Activated naive CD8-positive, alpha-beta T cell treated with anti-CD3 and anti-CD28 coated beads, Interleukin-2, amount 10 ng/mL, durations not matched to agents 7 days and 5 days (primary cell): ENCODE measurements at regions of chr7 and their contacts with region 1.

Region 1: GRCh38 chr7:111089822-111090426 is 1.0 kb upstream of the LRRN3 start:
- DNase-seq: no peak
- ATAC-seq: no peak
- H3K4me3 Mint-ChIP-seq: peak overlapping the region; percentile 99
- H3K27ac Mint-ChIP-seq: no peak overlapping the region
- H3K4me1 Mint-ChIP-seq: peaks cover 43% of the 10 kb centered on the region
- H3K27me3 Mint-ChIP-seq: no peaks in the 10 kb centered on the region

Region 2: DNA sequence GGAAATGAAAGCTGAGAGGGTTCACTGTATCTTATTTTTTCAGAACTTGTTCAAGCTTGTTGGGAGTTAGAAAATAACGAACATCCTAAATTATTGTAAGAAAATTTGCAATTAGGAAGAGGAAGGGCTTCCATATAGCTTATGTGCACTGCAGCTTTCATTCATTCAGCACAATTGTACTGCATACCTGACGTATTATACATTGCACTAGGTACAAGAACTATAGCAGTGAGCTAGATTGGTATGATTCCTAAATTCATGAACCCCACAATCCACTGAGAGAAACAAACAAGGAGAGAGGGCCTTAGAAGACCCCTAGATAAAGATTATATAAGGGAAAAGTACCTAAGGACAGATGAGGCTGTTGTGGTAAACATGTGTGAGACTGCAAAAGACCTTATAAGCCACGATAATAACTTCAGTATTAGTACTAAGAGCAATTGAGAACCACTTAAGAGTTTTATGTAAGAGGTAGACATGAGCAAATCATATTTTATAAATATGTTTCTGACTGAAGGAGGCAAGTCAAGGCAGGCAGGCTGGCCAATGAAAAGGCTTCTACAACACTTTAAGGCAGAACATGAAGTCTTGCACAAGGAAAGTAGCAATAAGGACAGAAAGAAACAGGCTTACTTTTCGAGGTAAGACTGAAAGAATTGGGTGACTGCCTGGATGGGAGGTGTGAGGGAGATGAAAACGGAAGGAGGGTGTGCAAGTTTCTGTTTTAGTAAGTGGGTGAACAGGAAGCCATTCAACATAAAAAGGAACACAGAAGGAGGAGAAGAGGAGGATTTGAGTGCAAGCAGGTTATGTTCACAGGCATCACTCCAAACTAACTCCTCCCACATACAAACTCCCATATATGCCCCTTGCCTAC is 76.9 kb before region 1 on chr7:
- POLR2A ChIA-PET with region 1: interaction called, 46 read pairs
- DNase-seq: no peak
- ATAC-seq: peak; percentile 90
- H3K4me3 Mint-ChIP-seq: peak overlapping the region; percentile 85
- H3K27ac Mint-ChIP-seq: peak overlapping the region; percentile 95
- H3K4me1 Mint-ChIP-seq: peaks cover 67% of the 10 kb centered on the region
- H3K27me3 Mint-ChIP-seq: no peaks in the 10 kb centered on the region

Region 3: DNA sequence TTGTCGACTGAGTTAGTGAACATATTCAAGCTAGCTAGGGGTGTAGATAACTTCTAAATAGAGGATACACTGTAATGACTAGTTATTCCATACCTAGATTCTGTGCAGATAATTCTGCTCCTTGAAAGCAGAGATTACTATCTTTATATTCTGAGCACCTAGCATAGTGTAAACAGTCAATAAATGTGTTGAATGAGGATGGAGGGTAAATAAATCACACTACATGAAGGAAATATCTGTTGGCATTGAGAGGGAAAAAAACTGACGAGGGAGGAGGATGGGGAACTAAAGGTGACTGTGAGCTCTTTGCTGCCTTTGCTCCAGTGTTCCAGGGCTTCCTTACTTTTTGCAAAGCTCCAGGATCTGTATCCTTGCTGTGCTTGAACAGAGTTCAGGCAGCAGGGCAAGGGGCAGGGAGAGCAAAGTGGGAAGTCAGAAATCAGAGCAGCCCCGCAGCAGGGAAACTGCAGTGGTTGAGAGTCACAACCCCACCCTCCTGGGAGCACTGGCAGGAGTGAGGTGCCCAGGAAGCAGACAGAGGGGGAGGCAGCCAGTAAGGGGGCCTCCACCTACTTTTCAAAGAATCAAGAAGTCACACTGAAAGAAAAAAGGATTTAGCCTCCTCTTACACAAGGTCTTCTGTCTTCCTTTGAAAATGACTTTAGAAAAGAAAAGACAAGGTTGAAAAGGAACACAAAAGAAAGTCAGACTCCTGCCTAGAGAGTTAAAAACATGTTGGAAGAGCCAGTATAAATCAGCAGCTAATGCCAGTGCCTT is 70.8 kb before region 1 on chr7:
- POLR2A ChIA-PET with region 1: interaction called, 50 read pairs
- DNase-seq: peak; percentile 49
- ATAC-seq: peak; percentile 65
- H3K4me3 Mint-ChIP-seq: peak overlapping the region; percentile 55
- H3K27ac Mint-ChIP-seq: peak overlapping the region; percentile 60
- H3K4me1 Mint-ChIP-seq: peaks cover 74% of the 10 kb centered on the region
- H3K27me3 Mint-ChIP-seq: no peaks in the 10 kb centered on the region

Region 4: DNA sequence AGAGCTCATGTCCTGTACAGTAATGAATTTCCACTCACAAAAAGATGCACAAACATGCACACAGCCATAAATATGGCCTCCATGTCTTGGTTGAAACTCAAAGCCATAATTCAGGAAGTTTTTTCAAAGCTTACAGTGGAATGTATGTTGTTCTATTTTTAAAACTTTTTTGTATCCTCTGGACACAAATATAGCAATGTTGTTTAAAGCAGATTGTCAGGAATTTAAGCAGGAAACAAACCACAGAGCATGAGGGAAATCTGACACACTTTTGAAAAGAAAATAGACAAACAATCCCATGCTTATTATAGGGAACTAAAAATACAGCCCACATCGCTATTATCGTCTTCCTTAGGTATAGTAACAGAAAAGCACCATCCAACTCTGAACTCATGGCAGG is 22.5 kb after region 1 on chr7:
- POLR2A ChIA-PET with region 1: no interaction called
- DNase-seq: no peak
- ATAC-seq: no peak
- H3K4me3 Mint-ChIP-seq: no peak overlapping the region
- H3K27ac Mint-ChIP-seq: no peak overlapping the region
- H3K4me1 Mint-ChIP-seq: peaks cover 44% of the 10 kb centered on the region
- H3K27me3 Mint-ChIP-seq: no peaks in the 10 kb centered on the region

Region 5: DNA sequence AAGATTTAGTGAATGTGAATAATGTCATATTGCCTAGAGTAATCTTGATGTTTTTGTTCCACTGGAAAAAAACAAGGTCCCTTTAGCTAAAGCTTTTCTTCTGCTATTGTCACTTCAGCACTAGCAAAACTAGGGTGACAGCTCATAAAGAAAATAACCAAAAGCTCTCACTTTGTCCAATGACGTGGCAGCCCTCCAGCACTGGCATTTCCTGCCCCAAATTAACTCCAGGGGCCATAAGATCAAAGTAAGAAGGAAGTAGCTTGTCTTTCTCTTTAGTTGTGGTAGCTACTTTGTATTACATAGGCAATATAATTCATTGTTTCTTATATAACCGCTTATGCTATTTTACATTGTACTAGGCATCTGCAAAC is 48.3 kb after region 1 on chr7:
- POLR2A ChIA-PET with region 1: no interaction called
- DNase-seq: peak; percentile 40
- ATAC-seq: peak; percentile 97
- H3K4me3 Mint-ChIP-seq: peak overlapping the region; percentile 54
- H3K27ac Mint-ChIP-seq: peak overlapping the region; percentile 67
- H3K4me1 Mint-ChIP-seq: peaks cover 17% of the 10 kb centered on the region
- H3K27me3 Mint-ChIP-seq: no peaks in the 10 kb centered on the region